Esophagus squamous epithelium (tissue), 5 donors: ENCODE measurements at regions of chr11 and their contacts with region 1.

Region 1: GRCh38 chr11:94623120-94623735 is 56.1 kb downstream of the PIWIL4 start:
- DNase-seq: no peak
- H3K4me3 ChIP-seq: no peak overlapping the region
- H3K27ac ChIP-seq: no peak overlapping the region
- H3K4me1 ChIP-seq: peaks cover 0 to 8% (median 0%) of the 10 kb centered on the region in 3 donors
- H3K27me3 ChIP-seq: no peaks in the 10 kb centered on the region
- CTCF ChIP-seq: peak; percentile 51 to 92 (median 88)
- POLR2A ChIP-seq: no peak

Region 2: DNA sequence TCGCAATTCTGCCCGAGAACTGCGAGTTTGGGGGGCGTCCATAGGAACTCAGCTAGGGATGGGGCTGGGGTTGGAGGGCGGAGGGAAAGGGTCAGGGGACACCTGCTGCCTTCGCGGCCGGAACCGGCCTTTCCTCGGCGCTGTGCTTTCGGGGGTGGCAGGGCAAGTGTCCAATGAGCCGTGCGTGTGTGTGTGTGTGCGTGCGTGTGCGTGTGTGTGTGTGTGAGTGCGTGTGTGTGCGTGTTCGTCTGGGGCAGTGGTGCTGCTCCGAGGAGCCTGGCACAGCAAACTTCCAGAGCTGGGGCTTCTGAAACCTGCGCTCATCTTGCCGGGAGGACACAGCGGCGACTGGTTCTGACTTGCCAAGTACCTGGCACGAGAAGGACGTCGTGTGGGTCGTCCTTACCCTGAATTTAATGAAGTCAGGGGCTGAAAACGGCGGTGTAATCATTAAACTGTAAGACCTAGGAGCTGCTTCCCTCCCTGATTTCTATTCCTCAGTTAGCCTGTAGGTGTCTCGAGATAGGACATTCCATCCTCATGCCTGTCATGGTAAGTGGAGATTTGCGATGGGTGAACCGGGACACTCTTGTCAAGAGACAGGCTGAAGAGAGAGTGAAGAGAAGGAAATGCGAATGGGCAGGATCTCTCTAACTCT is 117.9 kb after region 1 on chr11:
- intact Hi-C with region 1: no loop called
- DNase-seq: no peak
- H3K4me3 ChIP-seq: peak overlapping the region; percentile 46 to 76 (median 62)
- H3K27ac ChIP-seq: peak overlapping the region; percentile 59 to 84 (median 70)
- H3K4me1 ChIP-seq: peaks cover 0 to 55% (median 6%) of the 10 kb centered on the region in 3 donors
- H3K27me3 ChIP-seq: peaks cover 0 to 8% (median 0%) of the 10 kb centered on the region in 4 donors
- CTCF ChIP-seq: peak in 4 of 6 experiments; percentile 57 to 74 (median 62)
- POLR2A ChIP-seq: no peak

Region 3: GRCh38 chr11:94897330-94897768 is 274.1 kb after region 1 on chr11:
- intact Hi-C with region 1: loop called (anchors 5 kb)
- DNase-seq: no peak
- H3K4me3 ChIP-seq: no peak overlapping the region
- H3K27ac ChIP-seq: no peak overlapping the region
- H3K4me1 ChIP-seq: no peaks in the 10 kb centered on the region
- H3K27me3 ChIP-seq: no peaks in the 10 kb centered on the region
- CTCF ChIP-seq: peak; percentile 69 to 85 (median 80)
- POLR2A ChIP-seq: no peak

Region 4: GRCh38 chr11:94973099-94973968 is 350.1 kb after region 1 on chr11 and contains the starts of genes CWC15 and KDM4D:
- intact Hi-C with region 1: loop called (anchors 10 kb)
- DNase-seq: peak; percentile 71
- H3K4me3 ChIP-seq: peak within 1 kb of the TSS; percentile 69 to 97 (median 79)
- H3K27ac ChIP-seq: peak within 1 kb of the TSS; percentile 83 to 94 (median 85)
- H3K4me1 ChIP-seq: peaks cover 6 to 21% (median 12%) of the 10 kb centered on the region in 3 donors
- H3K27me3 ChIP-seq: no peaks in the 10 kb centered on the region
- CTCF ChIP-seq: peak in 1 of 6 experiments; percentile 31
- POLR2A ChIP-seq: peak in 2 of 4 donors; percentile 18 to 56
- total RNA-seq, gene CWC15: 29.3 to 52.6 (median 37.6) TPM
- total RNA-seq, gene KDM4D: 0.38 to 0.83 (median 0.44) TPM